ENCODE measurements at regions of chr3 and their contacts with region 1.

Region 1: DNA sequence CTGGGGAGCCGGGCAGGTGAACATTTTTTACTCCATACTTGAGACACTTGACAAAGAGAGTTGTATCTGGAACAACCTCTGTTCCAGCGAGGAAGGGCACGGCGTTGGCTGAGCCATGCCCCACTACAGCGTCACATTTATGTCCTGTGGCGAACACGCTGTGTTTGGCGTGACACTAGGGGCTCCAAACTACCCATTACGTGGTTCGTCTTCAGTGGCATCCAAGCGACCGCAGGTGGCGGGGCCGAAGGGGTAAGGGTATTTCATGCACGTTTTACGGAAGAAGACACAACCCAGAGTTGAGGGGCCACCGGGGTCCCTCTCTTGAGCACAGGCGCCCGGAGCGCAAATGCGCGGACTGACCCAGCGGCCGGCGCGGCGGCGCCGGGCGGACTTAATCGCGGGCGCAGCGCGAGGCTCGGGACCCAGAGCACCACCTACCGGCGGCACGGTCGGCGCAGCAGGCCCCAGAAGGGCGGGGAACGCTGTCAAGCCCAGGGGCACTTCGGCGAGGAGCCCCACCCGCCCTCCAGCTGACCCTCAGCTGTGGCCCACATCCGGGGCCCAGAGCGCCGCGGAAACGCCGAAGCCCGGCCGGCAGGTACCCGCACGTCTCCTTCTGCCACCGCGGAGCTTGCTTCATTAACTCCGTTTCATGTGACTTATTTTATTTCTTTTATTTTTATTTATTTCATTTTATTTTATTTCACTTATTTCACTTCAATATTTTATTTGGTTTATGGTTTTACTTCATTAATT is 36.4 kb upstream of the TRIM71 start:
- DNase-seq: peak; percentile 8
- H3K4me3 ChIP-seq: peak overlapping the region; percentile 42
- H3K27me3 ChIP-seq: no peaks in the 10 kb centered on the region
- CTCF ChIP-seq: peak; percentile 78

Region 2: GRCh38 chr3:32791833-32792232 is 10.4 kb after region 1 on chr3:
- CTCF ChIA-PET with region 1: interaction called, 11 read pairs
- POLR2A ChIA-PET with region 1: no interaction called
- DNase-seq: peak; percentile 54
- H3K4me3 ChIP-seq: no peak overlapping the region
- H3K27me3 ChIP-seq: peaks cover 3% of the 10 kb centered on the region; the same call in 1 of the 2 replicates
- CTCF ChIP-seq: no peak